Activated CD4-positive, alpha-beta memory T cell treated with anti-CD3 and anti-CD28 coated beads for 36 hours (primary cell): ENCODE measurements at regions of chr20 and their contacts with region 1.

Region 1: GRCh38 chr20:50189681-50190582 is 698 bp upstream of the CEBPB start:
- DNase-seq: peak; percentile 90
- H3K4me3 Mint-ChIP-seq: peak overlapping the region; percentile 20
- H3K27ac Mint-ChIP-seq: no peak overlapping the region
- H3K4me1 Mint-ChIP-seq: peaks cover 23% of the 10 kb centered on the region
- H3K27me3 Mint-ChIP-seq: peaks cover 9% of the 10 kb centered on the region

Region 2: DNA sequence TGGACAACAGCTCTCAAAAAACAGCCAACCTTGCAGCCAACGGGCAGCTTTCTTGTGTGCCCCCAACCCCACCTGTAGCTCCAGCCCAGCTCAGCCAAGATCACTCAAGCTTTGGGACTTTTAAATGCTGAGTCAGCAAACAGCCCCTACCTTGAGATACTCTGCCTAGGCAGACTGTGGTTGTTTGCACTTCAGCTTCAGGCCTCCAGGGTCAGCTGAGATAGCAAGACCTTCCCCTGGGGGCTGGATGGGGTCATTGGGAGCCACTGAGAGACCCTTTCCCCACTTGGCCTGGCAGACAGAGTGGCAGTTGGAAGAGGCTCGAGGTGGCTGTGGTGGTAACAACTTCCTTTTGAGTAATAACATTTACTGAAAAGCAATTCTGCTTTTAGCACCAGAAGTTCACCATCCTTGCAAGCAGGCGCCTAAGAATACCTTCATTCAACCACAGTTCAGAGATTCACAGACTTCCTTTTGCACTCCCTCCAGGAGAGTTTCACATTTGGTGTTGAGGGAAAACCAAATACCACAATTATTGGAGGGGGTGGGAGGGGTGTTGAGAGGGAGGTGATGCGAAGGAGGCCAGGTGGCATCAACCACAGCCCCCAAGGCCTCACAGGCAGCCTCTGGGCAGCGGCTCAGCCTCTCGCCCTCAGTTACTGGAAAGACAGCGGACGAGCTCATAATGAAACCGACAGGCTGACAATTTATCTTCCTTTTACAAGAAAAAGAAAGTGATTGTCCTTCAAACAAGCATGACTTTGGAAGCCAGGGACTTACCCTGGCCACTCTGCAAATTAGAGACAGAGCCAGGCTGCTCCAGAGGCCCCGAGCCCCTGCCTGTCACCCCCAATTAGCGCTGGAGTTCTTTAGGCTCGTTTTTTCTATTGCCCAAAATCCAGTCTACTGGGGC is 148.8 kb after region 1 on chr20:
- CTCF ChIA-PET with region 1: interaction called, 4 read pairs
- POLR2A ChIA-PET with region 1: interaction called, 11 read pairs
- intact Hi-C with region 1: loop called (anchors 1 kb)
- DNase-seq: peak; percentile 91
- H3K4me3 Mint-ChIP-seq: peak overlapping the region; percentile 63
- H3K27ac Mint-ChIP-seq: peak overlapping the region; percentile 96
- H3K4me1 Mint-ChIP-seq: peaks cover 37% of the 10 kb centered on the region
- H3K27me3 Mint-ChIP-seq: no peaks in the 10 kb centered on the region

Region 3: GRCh38 chr20:50380641-50381040 is 190.7 kb after region 1 on chr20:
- CTCF ChIA-PET with region 1: interaction called, 3 read pairs
- POLR2A ChIA-PET with region 1: no interaction called
- intact Hi-C with region 1: loop called (anchors 5 kb)
- DNase-seq: no peak
- H3K4me3 Mint-ChIP-seq: no peak overlapping the region
- H3K27ac Mint-ChIP-seq: no peak overlapping the region
- H3K4me1 Mint-ChIP-seq: peaks cover 42% of the 10 kb centered on the region
- H3K27me3 Mint-ChIP-seq: no peaks in the 10 kb centered on the region

Region 4: DNA sequence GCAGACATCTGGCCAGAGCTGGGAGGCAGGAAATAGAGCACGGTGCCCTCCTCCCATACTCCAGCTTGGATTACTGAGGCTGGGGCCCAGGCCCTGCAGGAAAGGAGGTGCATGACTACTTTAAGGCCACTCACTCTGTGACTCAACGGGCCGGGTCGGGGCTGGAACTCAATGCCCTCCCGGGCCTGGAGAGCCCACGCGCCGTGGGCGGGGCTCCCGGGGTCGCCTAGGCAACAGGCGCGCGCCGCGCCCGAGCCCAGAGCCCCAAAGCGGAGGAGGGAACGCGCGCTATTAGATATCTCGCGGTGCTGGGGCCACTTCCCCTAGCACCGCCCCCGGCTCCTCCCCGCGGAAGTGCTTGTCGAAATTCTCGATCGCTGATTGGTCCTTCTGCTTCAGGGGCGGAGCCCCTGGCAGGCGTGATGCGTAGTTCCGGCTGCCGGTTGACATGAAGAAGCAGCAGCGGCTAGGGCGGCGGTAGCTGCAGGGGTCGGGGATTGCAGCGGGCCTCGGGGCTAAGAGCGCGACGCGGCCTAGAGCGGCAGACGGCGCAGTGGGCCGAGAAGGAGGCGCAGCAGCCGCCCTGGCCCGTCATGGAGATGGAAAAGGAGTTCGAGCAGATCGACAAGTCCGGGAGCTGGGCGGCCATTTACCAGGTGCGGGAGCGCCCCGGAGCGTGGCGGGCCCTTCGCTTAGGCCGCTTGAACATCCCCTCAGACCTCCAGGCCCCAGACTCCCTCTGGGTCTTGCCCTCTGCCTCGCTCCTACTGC is 320.2 kb after region 1 on chr20 and contains the start of gene PTPN1:
- CTCF ChIA-PET with region 1: interaction called, 3 read pairs
- POLR2A ChIA-PET with region 1: interaction called, 14 read pairs
- intact Hi-C with region 1: loop called (anchors 2 kb)
- DNase-seq: peak; percentile 99
- H3K4me3 Mint-ChIP-seq: peak within 1 kb of the TSS; percentile 86
- H3K27ac Mint-ChIP-seq: peak within 1 kb of the TSS; percentile 87
- H3K4me1 Mint-ChIP-seq: peaks cover 39% of the 10 kb centered on the region
- H3K27me3 Mint-ChIP-seq: no peaks in the 10 kb centered on the region
- total RNA-seq, gene PTPN1: 80.6 to 83.4 TPM